Natural killer cell (primary cell): ENCODE measurements at regions of chr2 and their contacts with region 1.

Region 1: DNA sequence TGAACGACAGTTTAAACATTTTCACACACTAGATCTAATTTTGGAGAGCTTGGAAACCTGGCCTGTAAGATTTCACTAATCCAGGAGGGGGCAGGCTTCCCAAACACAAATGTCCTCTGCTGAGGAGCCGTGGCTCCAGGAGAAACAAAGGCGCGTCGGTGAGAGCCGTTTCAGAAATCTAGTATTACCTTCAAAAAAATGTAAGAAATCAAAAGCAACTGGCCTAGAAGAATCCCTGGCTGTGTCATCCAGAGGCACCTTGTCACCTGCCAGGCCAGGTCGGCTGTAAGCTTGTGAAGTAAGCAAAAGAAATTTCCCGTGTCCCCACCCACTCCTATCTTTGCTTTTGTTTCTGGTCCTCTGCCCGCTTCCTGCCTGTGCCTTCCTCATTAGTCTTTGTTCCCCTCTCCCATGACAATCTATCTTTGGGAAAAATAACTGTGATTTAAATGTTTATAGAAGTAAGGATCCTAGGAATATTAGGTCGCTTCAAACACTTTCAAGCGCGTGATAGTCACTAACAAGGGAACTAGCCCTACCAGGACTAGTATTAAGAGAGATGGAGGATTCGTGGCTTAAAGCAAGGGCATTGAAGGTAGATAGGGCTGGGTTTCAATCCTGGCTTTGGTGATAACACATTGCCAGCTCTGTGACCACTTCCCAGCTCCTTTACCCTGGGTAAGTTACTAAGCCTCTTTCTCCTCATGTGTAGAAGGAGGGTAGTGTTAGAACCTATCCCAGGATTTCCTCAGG is 99.5 kb upstream of the STK39 start:
- DNase-seq: peak; percentile 50 to 85
- ATAC-seq: peak; percentile 81 to 96 (median 93)
- H3K4me3 ChIP-seq: peak overlapping the region; percentile 36
- H3K4me3 Mint-ChIP-seq: peak overlapping the region; percentile 91
- H3K27ac ChIP-seq: no peak overlapping the region
- H3K27ac Mint-ChIP-seq: peak overlapping the region in 1 of 2 donors; percentile 74
- H3K4me1 ChIP-seq: peaks cover 6% of the 10 kb centered on the region
- H3K4me1 Mint-ChIP-seq: peaks cover 9 to 10% of the 10 kb centered on the region in 2 donors
- H3K27me3 ChIP-seq: no peaks in the 10 kb centered on the region
- H3K27me3 Mint-ChIP-seq: peaks cover 0 to 7% of the 10 kb centered on the region in 2 donors
- CTCF ChIP-seq: peak; percentile 84

Region 2: DNA sequence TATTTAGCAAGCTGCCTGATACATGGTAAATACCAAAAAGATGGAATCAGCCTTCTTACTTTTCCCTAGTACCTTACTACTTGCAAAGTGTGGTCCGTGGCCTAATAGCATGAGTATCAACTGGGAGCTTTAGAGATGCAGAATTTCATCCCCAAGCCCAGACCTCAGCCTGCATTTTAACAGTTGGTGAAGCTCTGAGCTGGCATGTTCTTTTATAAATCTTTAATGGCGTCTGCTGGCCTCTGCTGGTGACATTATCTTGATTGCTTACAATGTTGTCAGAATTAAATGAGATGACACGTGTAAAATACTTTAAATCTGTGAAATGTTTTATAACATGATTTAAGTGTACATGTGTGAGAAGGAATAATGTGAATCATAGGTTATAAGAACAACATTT is 340.4 kb after region 1 on chr2:
- intact Hi-C with region 1: loop called (anchors 1 kb)
- DNase-seq: peak in 1 of 2 donors; percentile 43
- ATAC-seq: peak in 1 of 3 donors; percentile 35
- H3K4me3 ChIP-seq: no peak overlapping the region
- H3K4me3 Mint-ChIP-seq: no peak overlapping the region
- H3K27ac ChIP-seq: no peak overlapping the region
- H3K27ac Mint-ChIP-seq: no peak overlapping the region
- H3K4me1 ChIP-seq: no peaks in the 10 kb centered on the region
- H3K4me1 Mint-ChIP-seq: peaks cover 0 to 7% of the 10 kb centered on the region in 2 donors
- H3K27me3 ChIP-seq: no peaks in the 10 kb centered on the region
- H3K27me3 Mint-ChIP-seq: no peaks in the 10 kb centered on the region
- CTCF ChIP-seq: peak; percentile 15

Region 3: GRCh38 chr2:168705534-168706470 is 358.9 kb after region 1 on chr2:
- intact Hi-C with region 1: loop called (anchors 1 kb)
- DNase-seq: peak in 1 of 2 donors; percentile 31
- ATAC-seq: peak in 1 of 3 donors; percentile 45
- H3K4me3 ChIP-seq: no peak overlapping the region
- H3K4me3 Mint-ChIP-seq: no peak overlapping the region
- H3K27ac ChIP-seq: no peak overlapping the region
- H3K27ac Mint-ChIP-seq: no peak overlapping the region
- H3K4me1 ChIP-seq: no peaks in the 10 kb centered on the region
- H3K4me1 Mint-ChIP-seq: peaks cover 10 to 11% of the 10 kb centered on the region in 2 donors
- H3K27me3 ChIP-seq: no peaks in the 10 kb centered on the region
- H3K27me3 Mint-ChIP-seq: no peaks in the 10 kb centered on the region
- CTCF ChIP-seq: peak; percentile 25

Region 4: DNA sequence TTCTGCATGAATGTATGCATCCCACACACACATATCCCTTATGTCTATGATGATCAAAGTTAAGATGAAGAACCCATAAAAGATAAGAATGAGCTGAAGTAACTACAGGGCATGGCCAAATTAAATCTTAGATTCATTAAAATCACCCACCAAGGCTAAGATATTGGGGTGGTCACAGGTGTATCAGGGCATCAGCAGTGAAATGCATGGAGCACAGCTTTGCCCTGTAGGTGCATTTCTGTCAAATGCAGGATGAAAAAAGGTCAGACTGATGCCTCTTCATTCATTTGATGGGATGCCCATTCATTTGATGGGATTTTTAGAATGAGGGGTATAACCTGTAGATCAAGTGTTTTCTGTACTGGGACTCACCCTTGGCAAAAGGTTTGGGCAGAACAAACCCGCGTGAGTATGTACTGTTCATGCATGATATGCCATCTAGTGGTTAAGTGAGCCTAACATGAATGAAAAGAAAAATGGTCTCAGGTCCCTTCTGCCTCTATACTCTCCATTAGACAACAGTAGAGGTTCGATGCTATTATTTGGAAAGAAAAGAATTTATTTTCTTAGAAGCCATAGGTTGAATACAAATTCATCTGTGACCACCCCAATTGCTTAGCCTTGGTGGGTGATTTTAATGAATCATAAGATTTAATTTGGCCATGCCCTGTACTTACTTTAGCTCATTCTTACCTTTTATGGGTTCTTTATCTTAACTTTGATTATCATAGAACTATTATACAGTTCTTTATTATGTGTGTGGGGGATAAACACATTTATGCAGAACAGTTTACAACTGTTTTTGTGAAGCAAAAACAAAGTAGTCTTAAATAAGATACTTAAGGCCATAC is 412.3 kb after region 1 on chr2:
- intact Hi-C with region 1: loop called (anchors 1 kb)
- DNase-seq: peak in 1 of 2 donors; percentile 73
- ATAC-seq: peak; percentile 75 to 83 (median 80)
- H3K4me3 ChIP-seq: no peak overlapping the region
- H3K4me3 Mint-ChIP-seq: no peak overlapping the region
- H3K27ac ChIP-seq: no peak overlapping the region
- H3K27ac Mint-ChIP-seq: peak overlapping the region in 1 of 2 donors; percentile 78
- H3K4me1 ChIP-seq: peaks cover 18% of the 10 kb centered on the region
- H3K4me1 Mint-ChIP-seq: peaks cover 32 to 39% of the 10 kb centered on the region in 2 donors
- H3K27me3 ChIP-seq: no peaks in the 10 kb centered on the region
- H3K27me3 Mint-ChIP-seq: no peaks in the 10 kb centered on the region
- CTCF ChIP-seq: peak; percentile 48

Region 5: DNA sequence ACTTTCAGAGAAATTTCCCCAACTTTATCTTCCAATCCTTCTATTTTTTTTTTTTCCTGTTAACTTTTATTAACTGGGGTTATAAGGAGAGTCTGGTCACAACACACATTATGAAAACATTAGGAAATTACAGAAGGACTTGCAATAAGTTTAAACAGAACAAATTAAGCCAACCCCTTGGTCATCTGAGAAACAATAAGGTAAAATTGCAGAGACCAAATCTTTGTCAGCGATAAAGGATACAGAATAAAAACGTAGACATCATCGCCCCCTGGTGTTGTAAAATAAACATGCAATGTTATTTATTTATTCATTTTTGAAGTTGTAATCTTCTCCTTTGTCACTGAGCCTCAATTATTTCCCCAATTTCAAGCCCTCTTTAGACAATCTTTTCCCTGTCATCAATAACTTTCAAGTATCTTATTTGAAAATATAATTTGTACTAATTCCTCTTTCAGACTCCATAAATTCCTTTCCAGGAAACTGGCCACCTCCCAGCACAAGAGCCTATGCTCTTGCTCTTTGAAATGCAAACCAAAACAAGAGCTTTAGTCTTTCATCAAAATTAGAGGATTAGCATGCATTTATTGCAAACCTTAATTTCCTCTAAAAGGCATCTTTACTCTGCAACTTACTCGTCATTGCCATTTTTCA is 573.7 kb after region 1 on chr2:
- intact Hi-C with region 1: loop called (anchors 1 kb)
- DNase-seq: peak in 1 of 2 donors; percentile 68
- ATAC-seq: peak in 1 of 3 donors; percentile 60
- H3K4me3 ChIP-seq: no peak overlapping the region
- H3K4me3 Mint-ChIP-seq: no peak overlapping the region
- H3K27ac ChIP-seq: no peak overlapping the region
- H3K27ac Mint-ChIP-seq: no peak overlapping the region
- H3K4me1 ChIP-seq: no peaks in the 10 kb centered on the region
- H3K4me1 Mint-ChIP-seq: peaks cover 0 to 6% of the 10 kb centered on the region in 2 donors
- H3K27me3 ChIP-seq: no peaks in the 10 kb centered on the region
- H3K27me3 Mint-ChIP-seq: peaks cover 23 to 47% of the 10 kb centered on the region in 2 donors
- CTCF ChIP-seq: peak; percentile 68